Stomach (tissue), 19 donors: ENCODE measurements at regions of chr17 and their contacts with region 1.

Region 1: GRCh38 chr17:73156166-73156840 is 8.5 kb upstream of the SSTR2 start:
- DNase-seq: peak; percentile 83 to 89
- H3K4me3 ChIP-seq: no peak overlapping the region
- H3K27ac ChIP-seq: no peak overlapping the region
- H3K4me1 ChIP-seq: peaks cover 0 to 34% (median 20%) of the 10 kb centered on the region in 4 donors
- H3K27me3 ChIP-seq: peaks cover 0 to 23% (median 0%) of the 10 kb centered on the region in 3 donors
- CTCF ChIP-seq: peak in 5 of 7 experiments; percentile 57 to 83 (median 79)
- EP300 ChIP-seq: no peak
- POLR2A ChIP-seq: no peak

Region 2: DNA sequence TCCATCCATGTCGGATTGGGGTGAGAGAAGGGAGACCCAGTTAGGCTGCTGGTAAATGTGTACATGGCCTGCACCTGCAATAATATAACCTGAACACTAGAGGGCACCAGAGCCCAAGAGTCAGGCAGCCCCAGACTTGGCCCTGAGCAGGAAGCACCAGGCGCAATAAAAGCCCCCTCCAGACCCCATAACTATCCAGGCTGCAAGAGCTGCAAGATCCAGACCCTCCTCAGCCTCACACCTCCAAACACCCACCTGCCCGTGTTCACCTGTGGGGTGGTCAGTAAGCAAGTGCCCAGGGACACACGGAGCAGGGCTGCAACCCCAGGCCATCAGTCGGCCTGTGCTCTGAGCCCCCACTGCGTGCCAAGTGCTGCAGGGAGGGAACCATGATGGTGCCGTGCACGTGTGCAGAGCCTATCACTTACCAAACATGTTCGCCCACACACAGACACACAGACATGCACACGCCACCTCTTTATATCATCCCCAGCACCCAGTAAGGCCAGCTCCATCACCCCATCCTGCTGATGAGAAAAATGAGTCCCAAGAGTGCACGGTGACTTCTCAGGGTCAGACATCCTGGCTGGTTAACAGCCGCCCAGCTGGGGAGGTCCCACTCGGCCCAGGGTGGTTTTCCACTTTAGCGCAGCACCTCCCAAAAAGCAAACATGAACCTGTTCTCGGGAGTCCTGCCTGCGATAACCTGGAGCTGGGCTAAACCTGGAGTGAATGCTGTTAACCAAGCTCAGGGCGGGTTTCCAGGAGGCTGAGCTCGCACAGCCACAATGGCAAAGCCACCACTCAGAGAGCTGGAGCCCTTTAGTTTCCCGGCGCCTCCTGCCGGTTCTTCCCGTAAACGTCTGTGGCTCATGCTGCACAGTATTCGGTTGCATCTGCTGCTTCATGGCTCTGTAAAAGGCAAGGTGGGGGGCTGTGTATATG is 595.7 kb before region 1 on chr17:
- intact Hi-C with region 1: loop called (anchors 10 kb)
- DNase-seq: peak; percentile 92 to 93
- H3K4me3 ChIP-seq: peak overlapping the region in 1 of 4 donors; percentile 26
- H3K27ac ChIP-seq: peak overlapping the region; percentile 44 to 82 (median 61)
- H3K4me1 ChIP-seq: peaks cover 0 to 33% (median 17%) of the 10 kb centered on the region in 4 donors
- H3K27me3 ChIP-seq: peaks cover 0 to 14% (median 0%) of the 10 kb centered on the region in 3 donors
- CTCF ChIP-seq: peak in 5 of 7 experiments; percentile 72 to 88 (median 81)
- EP300 ChIP-seq: no peak
- POLR2A ChIP-seq: no peak

Region 3: GRCh38 chr17:72985881-72986720 is 170.2 kb before region 1 on chr17:
- intact Hi-C with region 1: loop called (anchors 10 kb)
- DNase-seq: peak; percentile 75 to 88
- H3K4me3 ChIP-seq: no peak overlapping the region
- H3K27ac ChIP-seq: no peak overlapping the region
- H3K4me1 ChIP-seq: peaks cover 4 to 19% (median 11%) of the 10 kb centered on the region in 4 donors
- H3K27me3 ChIP-seq: no peaks in the 10 kb centered on the region
- CTCF ChIP-seq: peak in 5 of 7 experiments; percentile 56 to 86 (median 76)
- EP300 ChIP-seq: no peak
- POLR2A ChIP-seq: no peak